ENCODE measurements at regions of chr9 and their contacts with region 1.

Region 1: DNA sequence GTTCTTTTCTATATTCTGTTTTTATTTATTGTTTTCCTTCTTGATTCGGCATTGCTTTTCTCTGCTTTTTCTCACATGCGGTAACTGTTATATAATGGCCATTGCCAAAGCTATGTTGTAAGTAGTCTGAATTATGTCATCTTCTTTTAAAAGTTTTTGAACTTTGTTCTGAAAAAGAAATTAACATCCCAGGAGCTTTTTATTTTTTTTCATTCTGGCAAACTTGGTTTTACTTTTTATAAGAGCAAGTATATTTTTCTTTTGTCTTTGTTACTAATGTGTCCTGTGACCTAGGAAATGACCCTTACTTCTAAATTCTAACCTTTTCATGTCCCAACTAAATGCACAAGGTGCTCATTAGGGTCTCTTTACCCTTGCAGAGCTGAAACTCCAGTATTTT is 26.7 kb upstream of the IZUMO3 start:
- DNase-seq: no peak
- ATAC-seq: no peak
- H3K4me3 ChIP-seq: no peak overlapping the region
- H3K27ac ChIP-seq: no peak overlapping the region
- H3K4me1 ChIP-seq: no peaks in the 10 kb centered on the region
- H3K27me3 ChIP-seq: no peaks in the 10 kb centered on the region

Region 2: DNA sequence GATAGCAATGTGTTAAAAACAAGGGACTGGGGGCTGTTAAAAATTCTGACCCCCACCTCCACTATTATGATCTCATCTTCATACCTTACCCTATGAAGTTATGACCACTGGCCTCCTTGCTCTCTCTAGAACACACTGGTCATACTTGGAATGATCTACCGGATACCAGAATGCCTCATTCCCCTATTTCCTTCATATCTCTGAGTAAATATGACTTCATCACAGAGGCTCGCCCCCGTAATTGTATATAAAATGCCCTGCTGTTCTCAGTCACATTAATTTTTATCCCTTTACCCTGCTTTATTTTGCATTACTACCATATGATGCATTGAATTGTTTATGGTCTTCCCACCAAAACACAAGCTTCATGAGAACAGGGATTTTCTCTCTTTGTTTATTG is 55.9 kb before region 1 on chr9:
- intact Hi-C with region 1: loop called in 1 of 2 experiments (anchors 5 kb)
- DNase-seq: no peak
- ATAC-seq: no peak
- H3K4me3 ChIP-seq: no peak overlapping the region
- H3K27ac ChIP-seq: no peak overlapping the region
- H3K4me1 ChIP-seq: no peaks in the 10 kb centered on the region
- H3K27me3 ChIP-seq: no peaks in the 10 kb centered on the region

Region 3: GRCh38 chr9:24624481-24624880 is 52.1 kb after region 1 on chr9:
- intact Hi-C with region 1: no loop called
- DNase-seq: no peak
- ATAC-seq: no peak
- H3K4me3 ChIP-seq: no peak overlapping the region
- H3K27ac ChIP-seq: no peak overlapping the region
- H3K4me1 ChIP-seq: no peaks in the 10 kb centered on the region
- H3K27me3 ChIP-seq: no peaks in the 10 kb centered on the region

Region 4: DNA sequence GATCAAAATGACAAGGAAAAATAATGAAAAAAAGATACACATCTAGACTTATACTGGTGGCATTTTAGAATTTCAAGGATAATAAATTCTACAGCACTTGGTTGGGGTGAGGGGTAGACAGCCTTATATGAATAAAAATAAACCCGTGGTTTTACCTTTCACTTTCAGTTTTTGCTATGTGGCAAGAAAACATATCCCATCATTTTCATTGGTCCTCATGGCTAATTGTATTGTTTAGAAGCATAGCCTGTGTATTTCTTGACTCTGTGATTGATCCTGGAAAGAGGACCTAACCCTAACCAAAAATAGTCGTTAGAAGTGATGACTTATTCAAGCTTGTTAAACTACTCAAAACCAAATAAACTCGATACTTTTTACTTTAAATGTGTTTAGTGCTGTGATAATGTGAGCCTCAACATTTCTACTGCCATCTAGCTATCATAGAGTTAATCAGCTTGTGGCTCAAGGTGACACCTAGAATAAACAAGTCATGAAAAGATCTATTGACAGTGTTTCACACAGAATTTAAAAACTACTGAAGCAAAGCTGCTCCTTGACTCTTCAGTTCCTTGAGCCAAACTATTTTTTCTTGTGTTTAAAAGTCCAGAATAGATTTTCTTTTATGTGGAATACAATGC is 126.6 kb after region 1 on chr9:
- intact Hi-C with region 1: no loop called
- DNase-seq: no peak
- ATAC-seq: no peak
- H3K4me3 ChIP-seq: no peak overlapping the region
- H3K27ac ChIP-seq: no peak overlapping the region
- H3K4me1 ChIP-seq: no peaks in the 10 kb centered on the region
- H3K27me3 ChIP-seq: no peaks in the 10 kb centered on the region

Measured in aorta (tissue), 5 donors.